Activated CD8-positive, alpha-beta T cell treated with anti-CD3 and anti-CD28 coated beads for 36 hours (primary cell): ENCODE measurements at regions of chr20 and their contacts with region 1.

Region 1: DNA sequence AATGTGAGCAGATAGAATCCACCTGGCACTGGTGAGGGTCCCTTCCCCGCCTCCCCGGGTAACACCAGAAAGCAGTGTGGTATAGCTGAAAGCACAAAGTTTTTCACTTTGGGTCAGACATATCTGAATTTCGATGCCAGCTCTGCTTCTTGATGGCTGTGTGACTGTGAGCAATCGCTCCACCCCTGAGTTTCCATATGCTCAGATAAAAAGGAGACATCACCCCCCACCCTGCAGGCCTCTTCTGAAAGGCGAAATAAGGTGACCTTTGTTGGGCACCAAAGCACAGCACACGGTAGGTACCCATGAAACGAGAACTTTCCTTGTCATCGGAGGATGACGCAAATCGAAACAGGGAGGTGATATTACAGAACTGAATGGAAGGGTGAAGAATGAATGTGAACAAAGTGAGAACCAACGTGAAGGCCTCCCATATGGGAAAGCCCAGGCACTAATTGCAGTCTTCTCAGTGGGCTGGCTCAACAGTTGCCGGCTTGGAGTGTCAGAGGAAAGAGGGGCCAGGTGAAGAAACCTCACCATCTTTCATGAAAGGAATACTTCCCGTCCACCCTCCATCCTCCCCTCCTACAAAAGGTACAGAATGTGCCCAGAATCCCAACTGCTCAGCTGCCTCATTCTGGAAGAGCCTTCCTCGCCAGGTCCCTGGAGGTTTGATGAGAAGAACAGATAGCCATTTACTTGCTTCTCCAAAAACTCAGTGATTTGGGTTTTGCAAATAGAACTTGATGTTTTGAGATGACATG is 61.8 kb downstream of the NFATC2 start:
- DNase-seq: peak; percentile 93
- ATAC-seq: peak; percentile 89
- H3K4me3 Mint-ChIP-seq: peak overlapping the region; percentile 65
- H3K27ac Mint-ChIP-seq: peak overlapping the region; percentile 99
- H3K4me1 Mint-ChIP-seq: peaks cover 89% of the 10 kb centered on the region
- H3K27me3 Mint-ChIP-seq: no peaks in the 10 kb centered on the region
- CTCF ChIP-seq: no peak

Region 2: GRCh38 chr20:51258582-51259180 is 222.0 kb before region 1 on chr20:
- CTCF ChIA-PET with region 1: no interaction called
- POLR2A ChIA-PET with region 1: no interaction called
- intact Hi-C with region 1: no loop called
- DNase-seq: no peak
- ATAC-seq: no peak
- H3K4me3 Mint-ChIP-seq: no peak overlapping the region
- H3K27ac Mint-ChIP-seq: no peak overlapping the region
- H3K4me1 Mint-ChIP-seq: no peaks in the 10 kb centered on the region
- H3K27me3 Mint-ChIP-seq: peaks cover 13% of the 10 kb centered on the region
- CTCF ChIP-seq: no peak

Region 3: GRCh38 chr20:51404298-51405060 is 76.2 kb before region 1 on chr20:
- CTCF ChIA-PET with region 1: interaction called, 5 read pairs
- POLR2A ChIA-PET with region 1: interaction called, 10 read pairs
- intact Hi-C with region 1: no loop called
- DNase-seq: peak; percentile 93
- ATAC-seq: peak; percentile 80
- H3K4me3 Mint-ChIP-seq: peak overlapping the region; percentile 5
- H3K27ac Mint-ChIP-seq: peak overlapping the region; percentile 99
- H3K4me1 Mint-ChIP-seq: peaks cover 87% of the 10 kb centered on the region
- H3K27me3 Mint-ChIP-seq: no peaks in the 10 kb centered on the region
- CTCF ChIP-seq: no peak

Region 4: DNA sequence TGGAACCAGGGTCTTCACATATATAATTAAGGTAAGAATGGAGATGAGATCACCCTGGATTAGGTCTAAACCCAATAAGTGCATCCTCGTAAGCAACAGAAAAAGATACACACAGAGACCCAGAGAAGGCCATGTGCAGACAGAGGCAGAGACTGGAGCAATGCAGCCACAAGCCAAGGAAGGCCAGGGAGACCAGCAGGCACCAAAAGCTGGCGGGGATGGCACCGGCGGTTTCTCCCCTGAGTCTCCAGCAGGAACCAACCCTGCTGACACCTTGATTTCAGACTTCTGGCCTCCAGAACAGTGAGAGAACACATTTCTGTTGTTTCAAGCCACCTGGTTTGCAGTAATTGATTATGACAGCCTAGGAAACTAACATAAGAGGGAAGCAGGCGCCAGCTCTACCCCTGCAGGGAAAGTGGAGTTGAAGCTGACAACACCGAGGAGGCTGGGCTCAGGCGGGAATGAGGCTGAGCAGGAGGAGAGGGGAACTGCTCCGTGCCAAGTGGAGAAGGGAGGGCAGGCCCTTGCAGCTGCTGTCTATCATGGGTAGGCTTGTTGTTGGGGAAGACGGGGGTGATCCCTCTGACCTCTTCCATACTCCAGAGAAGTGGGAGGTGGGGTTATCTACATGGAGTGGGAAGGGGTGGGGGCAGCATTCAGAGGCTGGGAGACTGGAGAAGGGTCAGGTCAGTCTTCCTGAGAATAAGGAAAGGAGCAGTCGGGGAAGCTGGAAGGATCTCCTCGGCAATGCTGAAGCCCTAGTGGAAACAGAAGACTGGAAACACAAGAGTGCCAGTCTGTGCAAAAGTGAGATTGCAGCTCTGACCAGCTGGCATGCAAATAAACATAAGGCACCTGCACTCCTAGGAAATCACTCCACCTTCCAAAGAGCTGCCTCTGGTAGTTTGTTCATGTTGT is 10.9 kb before region 1 on chr20:
- CTCF ChIA-PET with region 1: interaction called, 8 read pairs
- POLR2A ChIA-PET with region 1: interaction called, 20 read pairs
- intact Hi-C with region 1: no loop called
- DNase-seq: no peak
- ATAC-seq: no peak
- H3K4me3 Mint-ChIP-seq: no peak overlapping the region
- H3K27ac Mint-ChIP-seq: peak overlapping the region; percentile 94
- H3K4me1 Mint-ChIP-seq: peaks cover 52% of the 10 kb centered on the region
- H3K27me3 Mint-ChIP-seq: no peaks in the 10 kb centered on the region
- CTCF ChIP-seq: no peak

Region 5: GRCh38 chr20:51492167-51493092 is 11.7 kb after region 1 on chr20:
- CTCF ChIA-PET with region 1: interaction called, 10 read pairs
- POLR2A ChIA-PET with region 1: interaction called, 56 read pairs
- intact Hi-C with region 1: loop called (anchors 1 kb)
- DNase-seq: no peak
- ATAC-seq: no peak
- H3K4me3 Mint-ChIP-seq: no peak overlapping the region
- H3K27ac Mint-ChIP-seq: peak overlapping the region; percentile 92
- H3K4me1 Mint-ChIP-seq: peaks cover 93% of the 10 kb centered on the region
- H3K27me3 Mint-ChIP-seq: no peaks in the 10 kb centered on the region
- CTCF ChIP-seq: no peak

Region 6: DNA sequence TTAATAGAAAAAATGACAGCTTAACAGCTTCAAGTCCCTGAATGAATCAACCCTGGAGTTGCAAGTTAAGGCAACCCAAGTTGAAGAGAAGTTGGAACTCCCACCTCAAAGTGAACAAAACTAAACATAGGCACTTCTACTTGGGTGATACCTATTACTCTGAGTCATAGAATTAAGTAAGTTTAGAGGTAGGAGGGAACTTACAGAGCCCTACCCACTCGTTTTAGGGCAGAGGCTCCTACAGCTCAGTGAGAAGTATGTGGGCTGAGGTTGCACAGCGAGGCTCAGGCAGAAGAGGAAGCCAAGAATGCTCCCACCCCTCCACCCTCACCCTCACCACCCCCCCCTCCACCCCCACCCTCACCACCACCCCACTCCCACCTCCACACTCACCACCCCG is 19.6 kb after region 1 on chr20:
- CTCF ChIA-PET with region 1: interaction called, 9 read pairs
- POLR2A ChIA-PET with region 1: interaction called, 56 read pairs
- intact Hi-C with region 1: loop called (anchors 1 kb)
- DNase-seq: peak; percentile 79
- ATAC-seq: peak; percentile 82
- H3K4me3 Mint-ChIP-seq: no peak overlapping the region
- H3K27ac Mint-ChIP-seq: peak overlapping the region; percentile 92
- H3K4me1 Mint-ChIP-seq: peaks cover 82% of the 10 kb centered on the region
- H3K27me3 Mint-ChIP-seq: no peaks in the 10 kb centered on the region
- CTCF ChIP-seq: no peak

Region 7: DNA sequence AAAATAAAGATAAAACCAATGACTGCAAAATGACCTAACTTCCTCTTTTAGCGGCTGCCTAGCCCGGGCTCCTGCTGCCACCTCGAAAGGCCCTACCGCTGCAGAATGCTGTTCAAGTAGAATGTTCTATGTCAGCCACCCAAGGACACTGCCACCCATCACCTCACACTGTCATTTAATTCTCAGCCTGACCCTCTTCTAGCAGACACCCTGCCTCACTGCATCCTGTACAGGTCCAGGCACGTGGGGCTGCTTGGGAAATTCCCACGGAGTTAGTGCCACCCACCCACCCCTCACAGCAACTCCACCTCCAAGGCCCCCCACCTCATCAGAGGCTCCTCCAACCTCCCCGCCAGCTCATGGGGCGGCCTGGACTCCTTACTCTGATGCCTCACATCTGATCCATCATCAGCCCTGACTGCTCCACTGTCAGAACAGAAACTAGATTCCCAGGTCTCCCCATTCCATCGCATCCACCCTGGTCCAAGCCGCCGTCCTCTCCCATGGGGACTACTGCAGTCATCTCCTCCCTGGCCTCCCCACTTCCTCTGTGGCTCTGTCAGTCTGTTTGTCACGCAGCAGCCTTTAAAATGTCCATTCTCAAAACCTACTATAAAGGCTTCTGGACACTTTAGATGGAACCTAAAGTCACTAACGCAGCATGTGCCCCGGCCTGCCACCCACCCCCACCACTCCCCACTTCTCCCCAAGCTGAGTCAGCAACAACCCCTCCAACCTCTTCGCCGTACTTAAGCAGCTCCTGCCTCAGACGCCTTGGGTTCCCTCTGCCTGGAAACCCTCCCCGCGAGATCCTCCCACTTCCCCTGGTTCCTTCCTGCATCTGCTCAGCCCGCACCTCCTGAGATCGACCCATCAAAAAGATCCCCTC is 44.8 kb after region 1 on chr20:
- CTCF ChIA-PET with region 1: interaction called, 3 read pairs
- POLR2A ChIA-PET with region 1: interaction called, 22 read pairs
- intact Hi-C with region 1: loop called (anchors 2 kb)
- DNase-seq: peak; percentile 73
- ATAC-seq: peak; percentile 47
- H3K4me3 Mint-ChIP-seq: peak overlapping the region; percentile 74
- H3K27ac Mint-ChIP-seq: peak overlapping the region; percentile 99
- H3K4me1 Mint-ChIP-seq: peaks cover 73% of the 10 kb centered on the region
- H3K27me3 Mint-ChIP-seq: no peaks in the 10 kb centered on the region
- CTCF ChIP-seq: no peak

Region 8: DNA sequence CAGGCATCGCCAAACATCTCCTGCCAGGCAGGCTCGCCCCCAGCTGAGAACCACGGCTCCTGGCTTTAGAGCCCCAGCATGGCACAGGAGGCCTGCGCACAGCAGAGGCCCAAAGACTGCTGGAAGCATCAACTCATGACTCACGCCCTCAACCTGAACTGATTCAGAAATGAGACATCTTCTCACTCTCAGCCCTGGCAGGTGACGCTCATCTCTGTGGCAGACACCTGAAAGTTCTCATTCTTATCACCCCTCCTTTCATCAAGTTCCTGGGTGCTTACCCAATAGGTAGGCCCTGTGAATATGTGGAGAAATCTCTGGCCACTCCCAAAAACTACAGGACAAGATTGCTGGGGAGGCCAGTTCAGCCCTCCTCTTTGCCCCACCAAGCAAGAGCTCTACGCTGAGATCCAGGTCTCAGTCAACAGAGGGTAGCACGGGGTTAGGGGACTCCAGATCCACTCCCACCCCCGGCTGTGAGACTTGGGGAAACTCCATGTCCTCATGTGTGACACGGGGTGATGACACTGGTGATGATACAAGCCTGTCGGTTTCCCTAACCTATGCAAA is 50.5 kb after region 1 on chr20:
- CTCF ChIA-PET with region 1: interaction called, 3 read pairs
- POLR2A ChIA-PET with region 1: interaction called, 22 read pairs
- intact Hi-C with region 1: loop called (anchors 2 kb)
- DNase-seq: peak; percentile 92
- ATAC-seq: peak; percentile 80
- H3K4me3 Mint-ChIP-seq: peak overlapping the region; percentile 74
- H3K27ac Mint-ChIP-seq: peak overlapping the region; percentile 99
- H3K4me1 Mint-ChIP-seq: peaks cover 91% of the 10 kb centered on the region
- H3K27me3 Mint-ChIP-seq: no peaks in the 10 kb centered on the region
- CTCF ChIP-seq: no peak